ENCODE measurements at regions of chr11 and their contacts with region 1.

Region 1: DNA sequence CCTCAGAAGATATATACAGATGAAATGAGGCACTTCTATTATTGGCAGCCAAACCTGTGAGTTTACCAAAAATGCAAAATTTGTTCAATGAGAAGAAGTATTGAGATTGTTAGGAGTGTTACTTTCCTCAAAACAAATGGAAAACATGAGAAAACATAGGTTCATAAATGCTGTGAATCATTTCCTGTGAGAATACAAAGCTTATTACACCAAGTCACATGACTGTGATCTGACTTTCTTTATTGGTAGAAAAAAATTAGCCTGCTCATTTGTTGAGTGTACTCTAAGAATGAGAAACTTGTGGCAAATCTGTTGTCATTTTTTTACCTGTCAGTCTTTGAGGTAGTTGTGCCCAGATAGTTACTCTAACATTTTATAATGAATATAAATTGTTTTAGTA is 215.1 kb downstream of the TMEM135 start:
- DNase-seq: peak; percentile 51
- H3K4me3 ChIP-seq: no peak overlapping the region
- H3K27ac ChIP-seq: no peak overlapping the region
- H3K4me1 ChIP-seq: peaks cover 7% of the 10 kb centered on the region
- H3K27me3 ChIP-seq: no peaks in the 10 kb centered on the region
- CTCF ChIP-seq: no peak

Region 2: DNA sequence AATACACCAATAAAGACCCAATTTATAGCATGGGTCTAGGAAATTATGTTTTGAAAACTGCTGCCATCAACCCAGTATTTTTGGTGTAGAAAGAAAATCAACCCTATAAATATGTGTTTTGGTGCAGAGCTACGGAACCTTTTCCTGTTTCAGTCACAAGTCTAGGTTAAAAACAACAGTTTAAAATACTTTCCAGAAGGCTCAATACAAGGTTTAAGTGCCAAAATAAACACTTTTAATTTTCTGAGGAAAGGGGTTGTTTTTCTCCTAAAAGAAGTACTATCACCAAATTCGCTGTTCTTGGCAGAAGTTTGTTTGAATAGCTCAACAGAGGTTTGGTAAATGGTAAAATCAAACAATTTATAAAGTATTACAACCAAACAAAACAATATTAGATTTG is 13.9 kb before region 1 on chr11:
- CTCF ChIA-PET with region 1: no interaction called
- POLR2A ChIA-PET with region 1: interaction called, 13 read pairs
- intact Hi-C with region 1: no loop called
- DNase-seq: no peak
- H3K4me3 ChIP-seq: no peak overlapping the region
- H3K27ac ChIP-seq: peak overlapping the region; percentile 57
- H3K4me1 ChIP-seq: peaks cover 30% of the 10 kb centered on the region
- H3K27me3 ChIP-seq: no peaks in the 10 kb centered on the region
- CTCF ChIP-seq: no peak

Measured in A673 (cell line).